Esophagus muscularis mucosa (tissue), 4 donors: ENCODE measurements at regions of chr18 and their contacts with region 1.

Region 1: DNA sequence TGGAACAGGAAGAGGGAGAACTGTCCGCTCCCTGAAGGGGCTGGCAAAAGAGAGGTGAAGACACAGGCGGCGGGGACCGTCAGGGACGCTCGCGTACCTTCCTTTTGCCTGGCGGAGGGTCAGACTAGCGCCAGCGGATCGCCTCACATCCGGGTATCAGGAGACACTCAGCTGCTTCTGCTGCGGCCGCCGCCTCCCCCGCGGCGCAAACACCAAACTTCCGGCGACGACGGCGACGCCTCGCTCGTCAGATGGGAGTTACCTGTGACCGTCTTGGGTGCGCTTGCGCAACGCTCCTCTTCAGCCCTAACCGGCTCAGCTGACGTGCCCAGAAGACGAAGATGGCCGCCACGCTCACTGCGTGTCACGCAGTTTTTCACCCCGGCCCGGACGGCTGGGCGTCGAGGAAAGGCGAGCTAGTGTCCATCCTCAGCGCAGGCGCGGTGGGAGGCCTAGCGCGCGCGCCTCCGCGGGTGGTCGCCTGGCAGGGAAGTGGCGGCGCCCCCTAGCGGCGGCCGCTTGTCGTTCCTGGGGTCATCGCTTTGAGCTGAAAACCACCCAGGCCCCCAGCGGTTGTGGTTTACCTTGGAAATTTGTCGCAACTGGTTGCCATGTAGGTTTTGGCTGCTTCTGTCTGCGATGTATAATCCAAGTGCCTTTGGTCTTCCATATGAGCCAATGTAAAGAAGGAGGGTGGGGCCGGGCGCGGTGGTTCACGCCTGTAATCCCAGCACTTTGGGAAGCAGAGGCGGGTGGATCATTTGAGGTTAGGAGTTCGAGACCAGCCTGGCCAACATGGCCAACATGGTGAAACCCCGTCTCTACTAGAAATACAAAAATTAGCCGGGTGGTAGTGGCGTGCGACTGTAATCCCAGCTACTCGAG is at the start of gene ESCO1:
- DNase-seq: peak; percentile 98
- H3K4me3 ChIP-seq: peak within 1 kb of the TSS; percentile 71 to 94 (median 76)
- H3K27ac ChIP-seq: peak within 1 kb of the TSS; percentile 93 to 97 (median 95)
- H3K4me1 ChIP-seq: peaks cover 15 to 38% (median 25%) of the 10 kb centered on the region in 4 donors
- H3K27me3 ChIP-seq: no peaks in the 10 kb centered on the region
- CTCF ChIP-seq: peak; percentile 96 to 98 (median 96)
- EP300 ChIP-seq: no peak
- POLR2A ChIP-seq: peak; percentile 69
- total RNA-seq, gene ESCO1: 12.6 to 19.5 (median 15.0) TPM

Region 2: GRCh38 chr18:21489119-21489750 is 111.5 kb before region 1 on chr18:
- intact Hi-C with region 1: loop called (anchors 10 kb)
- DNase-seq: no peak
- H3K4me3 ChIP-seq: no peak overlapping the region
- H3K27ac ChIP-seq: no peak overlapping the region
- H3K4me1 ChIP-seq: peaks cover 0 to 8% (median 5%) of the 10 kb centered on the region in 4 donors
- H3K27me3 ChIP-seq: no peaks in the 10 kb centered on the region
- CTCF ChIP-seq: peak; percentile 61 to 79 (median 68)
- EP300 ChIP-seq: no peak
- POLR2A ChIP-seq: no peak